ENCODE measurements at regions of chr15 and their contacts with region 1.

Region 1: GRCh38 chr15:65368302-65369211 is 9.2 kb downstream of the IGDCC3 start:
- DNase-seq: peak in 1 of 5 donors; percentile 34
- ATAC-seq: peak in 2 of 4 donors; percentile 25 to 49
- H3K4me3 ChIP-seq: no peak overlapping the region
- H3K27ac ChIP-seq: no peak overlapping the region
- H3K4me1 ChIP-seq: peaks cover 0 to 5% (median 0%) of the 10 kb centered on the region in 12 donors
- H3K27me3 ChIP-seq: peaks cover 0 to 13% (median 0%) of the 10 kb centered on the region in 9 donors
- CTCF ChIP-seq: no peak
- POLR2A ChIP-seq: no peak

Region 2: GRCh38 chr15:65334586-65335231 is 33.8 kb before region 1 on chr15:
- intact Hi-C with region 1: loop called in 1 of 10 experiments (anchors 5 kb)
- DNase-seq: no peak
- ATAC-seq: no peak
- H3K4me3 ChIP-seq: no peak overlapping the region
- H3K27ac ChIP-seq: no peak overlapping the region
- H3K4me1 ChIP-seq: no peaks in the 10 kb centered on the region
- H3K27me3 ChIP-seq: peaks cover 0 to 9% (median 0%) of the 10 kb centered on the region in 9 donors
- CTCF ChIP-seq: no peak
- POLR2A ChIP-seq: no peak

Region 3: GRCh38 chr15:65887565-65887964 is 519.0 kb after region 1 on chr15:
- intact Hi-C with region 1: no loop called
- DNase-seq: no peak
- ATAC-seq: no peak
- H3K4me3 ChIP-seq: no peak overlapping the region
- H3K27ac ChIP-seq: peak overlapping the region in 1 of 12 donors; percentile 40
- H3K4me1 ChIP-seq: peaks cover 0 to 40% (median 1%) of the 10 kb centered on the region in 12 donors
- H3K27me3 ChIP-seq: no peaks in the 10 kb centered on the region
- CTCF ChIP-seq: no peak
- POLR2A ChIP-seq: no peak

Measured in heart left ventricle (tissue), 16 donors.